ENCODE measurements at regions of chr20 and their contacts with region 1.

Region 1: GRCh38 chr20:18412221-18412901 is 54.5 kb downstream of the DZANK1 start:
- H3K4me3 Mint-ChIP-seq: peak overlapping the region; percentile 44
- H3K27ac Mint-ChIP-seq: peak overlapping the region; percentile 78
- H3K4me1 Mint-ChIP-seq: peaks cover 10% of the 10 kb centered on the region
- H3K27me3 Mint-ChIP-seq: no peaks in the 10 kb centered on the region

Region 2: DNA sequence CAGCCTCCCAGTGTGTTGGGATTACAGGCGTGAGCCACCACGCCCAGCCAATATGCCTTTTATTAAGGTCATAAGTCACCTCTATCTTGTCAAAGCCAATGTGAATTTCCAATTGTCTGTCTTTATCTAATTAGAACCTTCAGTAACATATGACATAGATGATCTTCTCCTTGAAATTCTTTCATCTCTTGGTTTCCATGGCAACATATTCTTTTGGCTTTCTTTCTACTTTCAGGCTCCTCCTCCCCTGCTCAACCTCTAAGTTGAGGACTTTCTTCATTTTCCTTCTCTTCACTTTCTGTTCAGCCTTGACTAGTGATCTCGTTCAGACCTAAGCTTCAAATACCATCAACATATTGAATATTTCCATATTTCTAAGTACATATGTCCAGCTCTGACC is 38.8 kb after region 1 on chr20:
- intact Hi-C with region 1: no loop called
- H3K4me3 Mint-ChIP-seq: no peak overlapping the region
- H3K27ac Mint-ChIP-seq: no peak overlapping the region
- H3K4me1 Mint-ChIP-seq: no peaks in the 10 kb centered on the region
- H3K27me3 Mint-ChIP-seq: no peaks in the 10 kb centered on the region

Region 3: GRCh38 chr20:18507218-18508021 is 95.1 kb after region 1 on chr20 and contains the start of gene SEC23B:
- intact Hi-C with region 1: loop called (anchors 5 kb)
- H3K4me3 Mint-ChIP-seq: peak within 1 kb of the TSS; percentile 100
- H3K27ac Mint-ChIP-seq: peak within 1 kb of the TSS; percentile 97
- H3K4me1 Mint-ChIP-seq: peaks cover 44% of the 10 kb centered on the region
- H3K27me3 Mint-ChIP-seq: peaks cover 3% of the 10 kb centered on the region

Region 4: GRCh38 chr20:18543932-18544331 is 131.6 kb after region 1 on chr20:
- intact Hi-C with region 1: loop called (anchors 10 kb)
- H3K4me3 Mint-ChIP-seq: no peak overlapping the region
- H3K27ac Mint-ChIP-seq: peak overlapping the region; percentile 47
- H3K4me1 Mint-ChIP-seq: no peaks in the 10 kb centered on the region
- H3K27me3 Mint-ChIP-seq: no peaks in the 10 kb centered on the region

Region 5: GRCh38 chr20:18793625-18794427 is 381.5 kb after region 1 on chr20:
- intact Hi-C with region 1: loop called (anchors 5 kb)
- H3K4me3 Mint-ChIP-seq: peak overlapping the region; percentile 85
- H3K27ac Mint-ChIP-seq: peak overlapping the region; percentile 96
- H3K4me1 Mint-ChIP-seq: peaks cover 7% of the 10 kb centered on the region
- H3K27me3 Mint-ChIP-seq: peaks cover 25% of the 10 kb centered on the region